ENCODE measurements at regions of chr10 and their contacts with region 1.

Region 1: GRCh38 chr10:47340608-47341170 is 7.5 kb upstream of the RBP3 start:
- DNase-seq: peak; percentile 44 to 81 (median 66)
- ATAC-seq: peak; percentile 75
- H3K4me3 ChIP-seq: no peak overlapping the region
- H3K4me3 Mint-ChIP-seq: no peak overlapping the region
- H3K27ac ChIP-seq: no peak overlapping the region
- H3K27ac Mint-ChIP-seq: no peak overlapping the region
- H3K4me1 ChIP-seq: no peaks in the 10 kb centered on the region
- H3K4me1 Mint-ChIP-seq: no peaks in the 10 kb centered on the region
- H3K27me3 ChIP-seq: peaks cover 0 to 5% of the 10 kb centered on the region in 2 experiments
- H3K27me3 Mint-ChIP-seq: peaks cover 6% of the 10 kb centered on the region
- CTCF ChIP-seq: peak; percentile 99

Region 2: DNA sequence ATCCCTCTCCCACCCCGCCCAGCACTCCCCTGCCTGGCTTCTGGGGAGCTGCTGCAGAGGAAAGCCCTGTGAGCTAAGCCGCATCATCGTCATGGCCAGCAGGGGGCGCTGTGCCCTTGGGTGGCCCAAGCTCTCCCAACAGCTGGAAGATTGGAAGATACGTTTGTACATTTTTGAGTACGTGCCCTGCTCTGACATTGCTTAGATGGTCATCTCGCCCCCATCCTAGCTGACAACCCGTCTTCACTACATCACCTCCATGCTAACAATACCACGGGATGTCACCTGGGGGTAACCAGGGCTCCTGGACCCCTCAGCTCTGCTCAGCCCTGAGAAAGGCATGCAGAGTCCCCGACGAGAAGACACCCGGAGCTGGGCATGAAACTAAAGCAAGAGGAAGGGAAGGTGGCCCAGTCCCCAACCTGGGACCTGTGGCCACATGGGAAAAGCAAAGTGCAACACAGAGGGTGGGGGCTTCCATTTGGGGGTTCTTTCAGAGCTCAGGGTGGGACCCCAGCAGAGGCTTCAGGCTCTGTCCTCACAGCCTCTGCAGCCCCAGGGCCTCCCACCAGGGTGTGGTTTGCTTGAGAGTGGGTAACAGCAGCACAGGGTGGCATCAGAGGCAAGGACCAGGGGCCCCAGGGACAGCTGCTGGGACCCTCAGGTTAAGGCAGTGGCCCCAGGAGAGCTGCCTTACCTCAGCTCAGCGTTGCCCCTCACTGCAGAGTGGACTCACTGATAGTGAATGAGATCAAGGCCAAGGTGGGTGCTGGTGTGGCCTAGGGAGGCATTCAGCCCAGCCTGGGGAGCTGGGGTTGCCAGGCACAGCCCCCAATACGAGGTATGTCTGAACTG is 292.8 kb before region 1 on chr10:
- CTCF ChIA-PET with region 1: interaction called, 12 read pairs
- POLR2A ChIA-PET with region 1: no interaction called
- intact Hi-C with region 1: loop called in 1 of 2 experiments (anchors 1 kb)
- DNase-seq: peak; percentile 60 to 87 (median 74)
- ATAC-seq: peak; percentile 60
- H3K4me3 ChIP-seq: no peak overlapping the region
- H3K4me3 Mint-ChIP-seq: no peak overlapping the region
- H3K27ac ChIP-seq: no peak overlapping the region
- H3K27ac Mint-ChIP-seq: no peak overlapping the region
- H3K4me1 ChIP-seq: peaks cover 17% of the 10 kb centered on the region
- H3K4me1 Mint-ChIP-seq: peaks cover 23% of the 10 kb centered on the region
- H3K27me3 ChIP-seq: no peaks in the 10 kb centered on the region
- H3K27me3 Mint-ChIP-seq: no peaks in the 10 kb centered on the region
- CTCF ChIP-seq: peak; percentile 86

Measured in CD4-positive, alpha-beta T cell (primary cell).